ENCODE measurements at regions of chr7 and their contacts with region 1.

Region 1: DNA sequence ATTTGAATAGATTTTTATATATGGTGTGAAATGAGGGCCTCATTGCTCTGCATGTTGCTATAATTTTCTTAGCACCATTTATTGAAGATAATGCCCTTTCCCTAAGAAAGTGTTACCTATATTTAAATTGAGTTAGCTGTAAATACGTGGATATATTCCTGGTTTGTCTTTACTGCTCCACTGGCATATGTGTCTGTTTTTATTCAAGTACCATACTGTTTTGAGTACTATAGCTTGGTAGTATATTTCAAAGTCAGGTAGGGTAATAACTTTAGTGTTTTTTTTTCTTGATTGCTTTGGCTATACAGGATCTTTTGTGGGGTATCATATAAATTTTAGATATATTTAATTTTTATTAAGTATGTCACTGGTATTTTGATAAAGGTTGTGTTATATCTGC is 31.4 kb downstream of the ZNF273 start:
- H3K4me3 Mint-ChIP-seq: no peak overlapping the region
- H3K27ac Mint-ChIP-seq: no peak overlapping the region
- H3K4me1 Mint-ChIP-seq: no peaks in the 10 kb centered on the region
- H3K27me3 Mint-ChIP-seq: no peaks in the 10 kb centered on the region

Region 2: GRCh38 chr7:64528770-64529169 is 405.7 kb before region 1 on chr7:
- intact Hi-C with region 1: loop called (anchors 10 kb)
- H3K4me3 Mint-ChIP-seq: no peak overlapping the region
- H3K27ac Mint-ChIP-seq: no peak overlapping the region
- H3K4me1 Mint-ChIP-seq: no peaks in the 10 kb centered on the region
- H3K27me3 Mint-ChIP-seq: no peaks in the 10 kb centered on the region

Region 3: DNA sequence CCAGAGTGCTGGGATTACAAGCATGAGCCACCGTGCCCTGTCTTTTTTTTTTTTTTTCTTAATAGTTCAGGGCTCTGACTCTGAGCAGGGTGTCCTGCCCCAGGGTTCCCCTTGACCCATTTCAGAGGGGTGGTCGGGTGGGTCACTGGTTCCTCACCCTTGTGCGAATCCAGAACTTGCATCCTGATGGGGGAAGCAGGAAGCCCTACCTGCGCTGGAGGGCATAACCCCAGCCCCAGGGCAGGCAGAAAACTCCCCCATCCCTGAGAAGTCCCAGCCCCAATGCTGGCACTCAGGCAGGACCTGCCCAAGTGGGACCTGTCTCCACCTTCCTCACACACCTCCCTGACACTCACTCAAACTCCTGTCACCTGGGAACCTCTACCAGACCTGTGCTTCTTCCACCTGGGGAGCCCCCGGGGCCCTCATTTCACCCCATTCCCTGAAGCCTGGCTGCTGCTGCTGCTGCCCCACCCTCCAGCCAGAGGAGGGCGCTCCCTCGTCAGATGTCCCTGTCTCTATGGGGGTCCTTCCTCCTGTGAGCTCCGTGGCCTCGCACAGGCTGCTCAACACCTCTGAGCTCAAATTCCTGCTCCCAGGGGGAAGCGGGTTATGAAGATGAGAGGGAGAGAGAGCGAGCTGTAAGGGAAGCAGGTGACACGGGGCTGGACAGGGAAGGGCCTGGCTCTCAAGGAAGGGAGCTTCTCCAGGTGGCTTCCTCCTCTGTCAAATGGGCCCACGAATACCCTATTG is 46.5 kb before region 1 on chr7:
- intact Hi-C with region 1: no loop called
- H3K4me3 Mint-ChIP-seq: peak overlapping the region; percentile 79
- H3K27ac Mint-ChIP-seq: peak overlapping the region; percentile 63
- H3K4me1 Mint-ChIP-seq: peaks cover 11% of the 10 kb centered on the region
- H3K27me3 Mint-ChIP-seq: peaks cover 69% of the 10 kb centered on the region

Region 4: DNA sequence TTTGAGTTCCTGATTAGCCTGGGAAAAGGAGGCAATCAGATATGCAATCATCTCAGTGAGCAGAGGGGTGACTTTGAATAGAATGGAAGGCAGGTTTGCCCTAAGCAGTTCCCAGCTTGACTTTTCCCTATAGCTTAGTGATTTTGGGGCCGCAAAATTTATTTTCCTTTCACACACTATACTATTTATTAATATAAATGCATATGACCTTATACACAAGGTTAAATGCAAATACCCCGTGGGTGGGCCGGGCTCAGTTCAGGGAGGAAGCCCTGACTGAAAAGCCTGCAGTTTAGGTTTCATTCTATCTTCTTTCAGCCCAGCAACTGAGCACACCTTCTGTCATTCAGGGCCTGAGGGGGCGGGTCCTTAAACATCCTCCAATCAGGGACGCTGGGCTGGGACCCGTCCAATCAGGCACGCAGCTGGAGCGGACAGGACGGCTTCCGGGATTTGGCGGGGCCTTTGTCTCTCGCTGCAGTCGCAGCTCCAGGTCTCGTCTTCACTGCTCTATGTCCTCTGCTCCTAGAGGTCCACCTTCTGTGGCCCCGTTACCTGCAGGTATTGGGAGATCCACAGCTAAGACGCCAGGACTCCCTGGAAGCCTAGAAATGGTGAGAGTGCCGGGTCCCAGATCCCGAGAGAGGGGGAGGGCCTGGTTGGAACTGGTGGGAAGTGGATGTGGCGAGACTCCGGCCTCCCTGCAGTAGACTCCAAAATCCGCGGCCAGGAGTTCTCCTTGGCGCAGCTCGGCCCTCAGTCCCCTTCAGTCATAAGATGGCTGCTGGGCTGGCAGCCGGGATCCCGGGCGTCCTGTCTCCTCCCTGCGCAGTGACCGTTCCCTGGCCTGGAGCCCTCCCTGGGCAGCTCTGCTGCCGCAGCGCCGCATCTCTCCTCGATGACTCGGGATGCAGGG is 31.4 kb before region 1 on chr7 and contains the start of gene ZNF273:
- intact Hi-C with region 1: no loop called
- H3K4me3 Mint-ChIP-seq: peak within 1 kb of the TSS; percentile 95
- H3K27ac Mint-ChIP-seq: peak within 1 kb of the TSS; percentile 93
- H3K4me1 Mint-ChIP-seq: peaks cover 33% of the 10 kb centered on the region
- H3K27me3 Mint-ChIP-seq: no peaks in the 10 kb centered on the region